Activated CD8-positive, alpha-beta T cell treated with anti-CD3 and anti-CD28 coated beads, Interleukin-2, amount 10 ng/mL, durations not matched to agents 7 days and 5 days (primary cell): ENCODE measurements at regions of chr5 and their contacts with region 1.

Region 1: GRCh38 chr5:54492178-54492577 is 25.4 kb upstream of the SNX18 start:
- DNase-seq: no peak
- ATAC-seq: no peak
- H3K4me3 Mint-ChIP-seq: no peak overlapping the region
- H3K27ac Mint-ChIP-seq: no peak overlapping the region
- H3K4me1 Mint-ChIP-seq: no peaks in the 10 kb centered on the region
- H3K27me3 Mint-ChIP-seq: peaks cover 13% of the 10 kb centered on the region

Region 2: GRCh38 chr5:54229041-54229780 is 263.0 kb before region 1 on chr5:
- CTCF ChIA-PET with region 1: interaction called, 12 read pairs
- POLR2A ChIA-PET with region 1: no interaction called
- DNase-seq: peak; percentile 81
- ATAC-seq: peak; percentile 75
- H3K4me3 Mint-ChIP-seq: no peak overlapping the region
- H3K27ac Mint-ChIP-seq: no peak overlapping the region
- H3K4me1 Mint-ChIP-seq: no peaks in the 10 kb centered on the region
- H3K27me3 Mint-ChIP-seq: no peaks in the 10 kb centered on the region

Region 3: DNA sequence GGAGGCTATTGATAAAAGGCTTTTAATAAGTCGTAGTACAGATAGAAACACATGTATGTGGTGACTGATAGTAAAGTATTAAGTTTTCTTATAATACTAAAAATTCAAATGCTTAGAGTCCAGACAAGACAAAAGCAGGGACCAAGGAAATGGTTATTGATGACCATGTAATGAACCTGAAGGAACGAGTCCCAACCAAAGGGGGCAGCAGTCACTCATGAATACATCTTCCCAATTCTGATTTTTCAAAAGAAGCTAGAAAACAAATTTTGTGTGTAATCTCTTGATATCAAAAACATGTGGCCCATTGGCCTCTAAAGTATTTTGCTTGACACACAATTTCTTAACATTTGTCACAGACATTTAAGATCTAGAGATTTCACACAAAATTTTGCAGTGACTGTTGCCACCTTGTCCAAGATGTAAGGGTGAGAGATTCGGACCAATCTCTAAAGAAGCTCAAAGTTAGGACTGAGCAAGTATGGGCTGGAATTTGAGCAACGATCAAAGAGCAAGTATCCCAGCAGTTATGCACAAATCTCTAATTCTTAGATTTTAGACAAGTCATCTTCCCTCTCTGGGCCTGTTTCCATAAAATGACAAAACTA is 248.6 kb before region 1 on chr5:
- CTCF ChIA-PET with region 1: interaction called, 34 read pairs
- POLR2A ChIA-PET with region 1: no interaction called
- DNase-seq: peak; percentile 56
- ATAC-seq: no peak
- H3K4me3 Mint-ChIP-seq: no peak overlapping the region
- H3K27ac Mint-ChIP-seq: no peak overlapping the region
- H3K4me1 Mint-ChIP-seq: peaks cover 3% of the 10 kb centered on the region
- H3K27me3 Mint-ChIP-seq: peaks cover 6% of the 10 kb centered on the region

Region 4: GRCh38 chr5:54443270-54443669 is 48.9 kb before region 1 on chr5:
- CTCF ChIA-PET with region 1: interaction called, 19 read pairs
- POLR2A ChIA-PET with region 1: no interaction called
- DNase-seq: no peak
- ATAC-seq: no peak
- H3K4me3 Mint-ChIP-seq: no peak overlapping the region
- H3K27ac Mint-ChIP-seq: no peak overlapping the region
- H3K4me1 Mint-ChIP-seq: peaks cover 17% of the 10 kb centered on the region
- H3K27me3 Mint-ChIP-seq: peaks cover 2% of the 10 kb centered on the region

Region 5: GRCh38 chr5:54533541-54534190 is 41.5 kb after region 1 on chr5:
- CTCF ChIA-PET with region 1: no interaction called
- POLR2A ChIA-PET with region 1: no interaction called
- DNase-seq: no peak
- ATAC-seq: no peak
- H3K4me3 Mint-ChIP-seq: no peak overlapping the region
- H3K27ac Mint-ChIP-seq: no peak overlapping the region
- H3K4me1 Mint-ChIP-seq: peaks cover 24% of the 10 kb centered on the region
- H3K27me3 Mint-ChIP-seq: no peaks in the 10 kb centered on the region

Region 6: GRCh38 chr5:54867310-54867944 is 375.2 kb after region 1 on chr5:
- CTCF ChIA-PET with region 1: interaction called, 14 read pairs
- POLR2A ChIA-PET with region 1: no interaction called
- DNase-seq: no peak
- ATAC-seq: peak; percentile 49
- H3K4me3 Mint-ChIP-seq: no peak overlapping the region
- H3K27ac Mint-ChIP-seq: no peak overlapping the region
- H3K4me1 Mint-ChIP-seq: peaks cover 20% of the 10 kb centered on the region
- H3K27me3 Mint-ChIP-seq: peaks cover 41% of the 10 kb centered on the region